Psoas muscle (tissue), 8 donors: ENCODE measurements at regions of chr17 and their contacts with region 1.

Region 1: DNA sequence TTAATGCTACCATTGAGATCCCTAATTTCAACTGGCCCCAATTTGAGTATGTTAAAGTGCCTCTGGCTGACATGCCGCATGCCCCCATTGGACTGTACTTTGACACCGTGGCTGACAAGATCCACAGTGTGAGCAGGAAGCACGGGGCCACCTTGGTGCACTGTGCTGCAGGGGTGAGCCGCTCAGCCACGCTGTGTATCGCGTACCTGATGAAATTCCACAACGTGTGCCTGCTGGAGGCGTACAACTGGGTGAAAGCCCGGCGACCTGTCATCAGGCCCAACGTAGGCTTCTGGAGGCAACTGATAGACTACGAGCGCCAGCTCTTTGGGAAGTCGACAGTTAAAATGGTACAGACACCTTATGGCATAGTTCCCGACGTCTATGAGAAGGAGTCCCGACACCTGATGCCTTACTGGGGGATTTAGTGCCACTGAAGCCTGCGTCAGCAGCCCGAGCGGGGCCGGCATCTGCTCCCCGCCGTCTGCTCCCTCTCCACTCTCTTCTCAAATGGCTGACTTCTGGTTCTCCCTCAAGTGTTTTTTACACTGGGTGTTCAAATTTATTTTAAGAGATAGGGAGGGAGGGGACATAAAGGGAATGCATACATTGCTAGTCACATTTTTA is 22.9 kb downstream of the DUSP14 start:
- DNase-seq: no peak
- ATAC-seq: peak; percentile 61 to 75 (median 62)
- H3K4me3 ChIP-seq: no peak overlapping the region
- H3K27ac ChIP-seq: no peak overlapping the region
- H3K4me1 ChIP-seq: peaks cover 4% of the 10 kb centered on the region
- H3K27me3 ChIP-seq: no peaks in the 10 kb centered on the region
- CTCF ChIP-seq: no peak

Region 2: DNA sequence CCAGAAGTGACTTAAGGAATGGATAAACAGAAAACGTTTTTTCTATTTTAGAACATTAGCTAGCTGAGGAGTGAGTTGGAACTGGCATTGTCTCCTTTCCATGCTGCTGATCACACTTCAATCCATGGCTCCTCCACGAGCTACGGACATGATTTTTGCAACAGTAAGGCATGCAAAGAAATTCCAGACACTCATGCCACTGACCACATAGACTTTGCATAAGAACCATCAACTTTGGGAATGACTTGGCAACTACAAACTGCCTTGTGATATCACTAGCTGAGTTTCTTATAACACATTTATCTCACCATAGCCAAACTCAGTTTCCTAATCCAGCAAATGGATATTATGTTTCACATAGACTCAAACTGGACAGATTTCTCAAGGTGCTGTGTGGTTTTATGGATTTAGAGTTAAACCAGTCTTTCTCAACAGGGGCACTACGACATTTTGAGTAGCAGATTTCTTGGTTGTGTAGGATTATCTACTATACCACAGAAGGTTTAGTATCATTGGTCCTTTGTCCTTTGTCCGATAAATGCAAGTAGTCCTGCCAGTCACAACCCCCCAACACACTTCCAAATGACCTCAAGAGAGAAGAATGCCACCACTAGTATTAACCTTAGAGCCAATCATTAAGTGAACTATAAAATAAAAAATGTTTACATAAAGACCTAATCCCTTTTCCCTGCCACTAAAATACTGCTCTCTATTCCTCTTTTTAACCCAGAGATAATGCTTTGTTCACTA is 185.0 kb before region 1 on chr17:
- intact Hi-C with region 1: loop called in 1 of 2 experiments (anchors 5 kb)
- DNase-seq: no peak
- ATAC-seq: peak; percentile 94 to 95 (median 95)
- H3K4me3 ChIP-seq: no peak overlapping the region
- H3K27ac ChIP-seq: peak overlapping the region; percentile 73
- H3K4me1 ChIP-seq: peaks cover 13% of the 10 kb centered on the region
- H3K27me3 ChIP-seq: no peaks in the 10 kb centered on the region
- CTCF ChIP-seq: no peak

Region 3: DNA sequence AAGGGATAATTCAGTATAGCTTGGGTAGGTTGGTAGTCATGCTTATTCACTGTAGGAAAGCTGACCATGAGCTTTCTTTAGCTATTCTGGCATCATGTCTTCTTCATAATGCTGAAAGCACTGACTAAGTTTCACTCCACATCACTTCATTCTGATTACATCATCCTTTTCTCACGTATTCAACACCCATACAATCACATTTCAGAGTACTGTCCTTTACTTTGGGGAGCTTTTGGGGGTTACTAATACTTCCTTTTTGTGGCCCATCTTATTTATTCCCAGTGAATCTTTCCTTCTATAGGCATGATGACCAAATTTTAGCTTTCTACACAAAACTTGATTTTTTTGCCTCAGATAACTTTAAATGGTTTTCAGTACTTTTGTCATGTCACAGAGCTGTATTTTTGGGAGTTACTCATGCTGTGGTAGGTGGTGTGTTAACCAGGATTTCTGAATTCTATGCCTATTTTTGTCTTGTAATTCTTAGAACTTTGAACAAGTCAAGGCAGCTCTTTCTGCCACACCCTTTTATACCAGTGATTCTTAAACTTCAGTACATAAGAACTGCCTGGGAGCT is 82.4 kb before region 1 on chr17:
- intact Hi-C with region 1: no loop called
- DNase-seq: no peak
- ATAC-seq: peak; percentile 74 to 89 (median 82)
- H3K4me3 ChIP-seq: no peak overlapping the region
- H3K27ac ChIP-seq: peak overlapping the region; percentile 62
- H3K4me1 ChIP-seq: peaks cover 12% of the 10 kb centered on the region
- H3K27me3 ChIP-seq: no peaks in the 10 kb centered on the region
- CTCF ChIP-seq: no peak